Gastrocnemius medialis (tissue), 4 donors: ENCODE measurements at regions of chr4 and their contacts with region 1.

Region 1: DNA sequence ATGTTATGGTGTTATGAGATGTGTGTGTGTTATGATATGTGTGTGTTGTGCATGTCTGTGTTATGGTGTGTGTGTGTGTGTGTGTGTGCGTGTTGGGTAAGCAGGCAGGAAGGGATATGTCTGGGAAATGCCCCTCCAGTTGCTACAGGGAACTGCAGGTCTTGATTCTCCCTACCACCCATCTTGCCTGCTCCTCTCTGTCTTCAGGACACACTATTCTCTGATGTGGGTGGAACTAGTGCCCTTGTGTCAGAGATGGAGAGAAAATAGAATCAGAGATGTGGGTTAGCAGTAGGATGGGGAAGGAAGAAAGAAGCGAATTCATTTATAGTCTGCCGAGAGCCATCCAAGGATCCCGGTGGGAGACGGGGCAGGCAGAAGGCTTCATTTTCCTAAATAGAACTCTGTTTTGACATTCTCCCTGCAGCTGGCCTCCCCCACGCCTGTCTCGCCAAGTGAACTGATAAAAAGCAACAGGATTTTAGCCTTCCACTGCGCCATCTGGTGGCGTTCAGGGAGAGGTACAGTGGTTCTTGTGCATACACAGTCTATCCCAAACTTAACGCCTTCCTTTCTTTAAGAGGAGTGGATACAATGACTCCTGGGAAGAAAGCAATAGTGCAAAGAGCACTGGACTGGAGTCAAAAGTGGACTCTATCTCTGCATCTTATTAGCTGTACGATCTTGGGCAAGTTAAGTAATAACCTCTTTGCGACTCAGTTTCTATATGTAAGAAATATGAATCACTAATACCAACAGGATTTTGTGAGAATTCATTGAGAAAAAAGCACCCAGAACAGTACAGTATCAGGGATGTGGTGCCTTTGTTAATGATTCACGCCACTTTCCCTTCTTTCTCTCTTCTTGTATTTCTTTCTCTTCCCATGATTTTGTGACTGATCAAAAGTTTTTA is 14.1 kb upstream of the MGST2 start:
- DNase-seq: peak; percentile 44 to 70
- ATAC-seq: peak; percentile 80 to 90
- H3K4me3 ChIP-seq: peak overlapping the region in 1 of 4 donors; percentile 8
- H3K27ac ChIP-seq: no peak overlapping the region
- H3K4me1 ChIP-seq: peaks cover 0 to 1% of the 10 kb centered on the region in 2 donors
- H3K27me3 ChIP-seq: no peaks in the 10 kb centered on the region
- CTCF ChIP-seq: peak; percentile 83 to 89 (median 87)
- POLR2A ChIP-seq: no peak

Region 2: DNA sequence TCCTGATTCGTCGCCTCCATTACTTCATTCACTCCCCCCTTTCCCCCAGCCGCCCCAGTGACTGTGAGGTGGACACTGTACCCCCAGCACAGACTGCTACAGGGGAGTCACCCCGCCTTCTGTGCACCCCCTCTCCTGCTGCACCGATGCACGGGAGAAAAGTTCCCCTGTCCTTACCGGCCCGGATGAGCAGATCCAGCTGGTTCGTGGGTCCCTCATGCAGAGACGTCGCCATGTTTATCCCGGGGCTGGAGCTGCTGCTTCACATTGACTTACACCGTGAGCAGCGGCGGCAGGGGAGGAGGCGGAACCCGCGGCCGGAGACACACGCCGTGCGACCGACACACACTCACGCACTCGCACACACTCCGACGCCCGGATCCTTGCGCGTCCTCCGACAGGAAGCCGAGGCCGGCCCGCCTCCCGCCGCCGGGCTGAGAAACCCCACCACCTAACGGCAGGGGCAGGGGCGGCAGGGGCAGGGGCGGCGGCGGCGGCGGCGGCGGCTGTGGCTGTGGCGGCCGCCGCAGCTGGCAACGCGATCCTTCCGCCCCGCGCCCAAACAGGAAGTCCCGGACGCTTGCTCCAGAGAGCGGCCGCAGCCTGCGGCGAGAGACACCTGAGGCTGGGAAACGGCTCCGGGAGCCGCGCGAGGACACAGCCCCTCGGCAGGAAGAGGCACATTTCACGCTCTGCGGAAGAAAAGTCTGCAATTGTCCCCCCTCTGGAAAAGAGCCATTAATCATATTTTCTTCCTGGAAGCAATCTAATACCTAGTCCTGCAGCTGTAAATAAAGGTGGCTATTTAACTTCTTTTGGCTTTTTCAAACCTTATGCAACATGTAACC is 567.4 kb before region 1 on chr4:
- in situ Hi-C with region 1: no loop called
- intact Hi-C with region 1: no loop called
- DNase-seq: peak; percentile 81 to 91
- ATAC-seq: peak; percentile 66 to 69
- H3K4me3 ChIP-seq: peak overlapping the region; percentile 65 to 90 (median 70)
- H3K27ac ChIP-seq: peak overlapping the region; percentile 92 to 98 (median 92)
- H3K4me1 ChIP-seq: peaks cover 38 to 41% of the 10 kb centered on the region in 2 donors
- H3K27me3 ChIP-seq: no peaks in the 10 kb centered on the region
- CTCF ChIP-seq: peak in 4 of 5 experiments; percentile 23 to 56 (median 48)
- POLR2A ChIP-seq: peak; percentile 37 to 58

Region 3: GRCh38 chr4:139402436-139402835 is 249.1 kb before region 1 on chr4:
- in situ Hi-C with region 1: no loop called
- intact Hi-C with region 1: no loop called
- DNase-seq: no peak
- ATAC-seq: no peak
- H3K4me3 ChIP-seq: no peak overlapping the region
- H3K27ac ChIP-seq: no peak overlapping the region
- H3K4me1 ChIP-seq: peaks cover 5 to 8% of the 10 kb centered on the region in 2 donors
- H3K27me3 ChIP-seq: no peaks in the 10 kb centered on the region
- CTCF ChIP-seq: no peak
- POLR2A ChIP-seq: no peak

Region 4: GRCh38 chr4:139493176-139493575 is 158.4 kb before region 1 on chr4:
- in situ Hi-C with region 1: loop called (anchors 5 to 10 kb)
- intact Hi-C with region 1: loop called (anchors 1 kb)
- DNase-seq: no peak
- ATAC-seq: no peak
- H3K4me3 ChIP-seq: no peak overlapping the region
- H3K27ac ChIP-seq: no peak overlapping the region
- H3K4me1 ChIP-seq: peaks cover 11 to 17% of the 10 kb centered on the region in 2 donors
- H3K27me3 ChIP-seq: no peaks in the 10 kb centered on the region
- CTCF ChIP-seq: no peak
- POLR2A ChIP-seq: no peak

Region 5: GRCh38 chr4:139501927-139502899 is 149.3 kb before region 1 on chr4:
- in situ Hi-C with region 1: loop called (anchors 5 to 10 kb)
- intact Hi-C with region 1: loop called (anchors 1 kb)
- DNase-seq: no peak
- ATAC-seq: no peak
- H3K4me3 ChIP-seq: no peak overlapping the region
- H3K27ac ChIP-seq: no peak overlapping the region
- H3K4me1 ChIP-seq: peaks cover 0 to 4% of the 10 kb centered on the region in 2 donors
- H3K27me3 ChIP-seq: no peaks in the 10 kb centered on the region
- CTCF ChIP-seq: no peak
- POLR2A ChIP-seq: no peak

Region 6: DNA sequence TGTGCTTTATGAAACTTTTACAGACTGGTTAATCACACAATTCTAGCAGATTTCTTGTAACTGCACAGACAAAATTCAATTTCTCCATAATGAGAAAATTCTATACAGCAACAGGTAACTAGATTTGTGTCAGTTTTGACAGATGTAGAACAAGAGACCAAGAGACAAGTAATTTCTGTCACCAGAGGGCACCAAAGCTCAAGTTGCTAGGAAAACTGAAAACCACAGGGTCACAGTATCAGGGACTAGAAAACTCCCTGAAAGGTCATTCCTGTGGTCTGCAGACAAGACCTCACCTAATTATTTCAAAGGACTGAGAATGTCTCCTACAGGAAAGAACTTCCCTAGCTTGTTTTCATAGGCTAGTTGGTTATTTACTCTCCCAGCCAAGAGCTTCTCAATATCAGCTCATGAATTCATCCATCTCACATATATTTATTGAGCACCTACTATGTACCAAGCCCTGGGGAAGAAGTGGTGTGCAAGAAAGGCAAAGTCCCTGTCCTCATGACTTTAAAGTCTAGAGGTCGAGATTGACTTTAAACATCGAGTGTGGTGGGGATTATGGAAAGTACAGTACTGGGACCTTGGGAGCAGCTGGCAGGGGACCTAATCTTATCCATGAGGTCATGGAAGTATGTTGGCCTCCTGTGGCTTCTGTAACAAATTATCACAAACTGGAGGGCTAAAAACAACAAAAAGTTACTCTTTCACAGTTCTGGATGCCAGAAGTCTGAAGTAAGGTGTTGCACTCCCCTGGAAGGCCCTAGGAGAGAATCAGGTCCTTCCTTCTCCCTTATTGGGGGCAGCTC is 47.8 kb before region 1 on chr4:
- in situ Hi-C with region 1: loop called in 1 of 4 experiments (anchors 5 kb)
- intact Hi-C with region 1: loop called (anchors 1 kb)
- DNase-seq: no peak
- ATAC-seq: peak; percentile 57 to 69
- H3K4me3 ChIP-seq: no peak overlapping the region
- H3K27ac ChIP-seq: no peak overlapping the region
- H3K4me1 ChIP-seq: no peaks in the 10 kb centered on the region
- H3K27me3 ChIP-seq: no peaks in the 10 kb centered on the region
- CTCF ChIP-seq: peak in 4 of 5 experiments; percentile 49 to 74 (median 57)
- POLR2A ChIP-seq: no peak

Region 7: GRCh38 chr4:139633661-139634060 is 17.9 kb before region 1 on chr4:
- in situ Hi-C with region 1: no loop called
- intact Hi-C with region 1: no loop called
- DNase-seq: no peak
- ATAC-seq: peak; percentile 75 to 79
- H3K4me3 ChIP-seq: peak overlapping the region in 2 of 4 donors; percentile 22
- H3K27ac ChIP-seq: no peak overlapping the region
- H3K4me1 ChIP-seq: peaks cover 0 to 6% of the 10 kb centered on the region in 2 donors
- H3K27me3 ChIP-seq: no peaks in the 10 kb centered on the region
- CTCF ChIP-seq: peak in 4 of 5 experiments; percentile 20 to 46 (median 42)
- POLR2A ChIP-seq: no peak

Region 8: GRCh38 chr4:139692309-139693012 is 40.9 kb after region 1 on chr4:
- in situ Hi-C with region 1: no loop called
- intact Hi-C with region 1: no loop called
- DNase-seq: peak; percentile 33 to 66
- ATAC-seq: peak; percentile 91 to 95
- H3K4me3 ChIP-seq: no peak overlapping the region
- H3K27ac ChIP-seq: peak overlapping the region; percentile 59 to 74 (median 67)
- H3K4me1 ChIP-seq: peaks cover 14 to 18% of the 10 kb centered on the region in 2 donors
- H3K27me3 ChIP-seq: no peaks in the 10 kb centered on the region
- CTCF ChIP-seq: peak; percentile 23 to 54 (median 48)
- POLR2A ChIP-seq: no peak